Lower leg skin (tissue), 4 donors: ENCODE measurements at regions of chr2 and their contacts with region 1.

Region 1: DNA sequence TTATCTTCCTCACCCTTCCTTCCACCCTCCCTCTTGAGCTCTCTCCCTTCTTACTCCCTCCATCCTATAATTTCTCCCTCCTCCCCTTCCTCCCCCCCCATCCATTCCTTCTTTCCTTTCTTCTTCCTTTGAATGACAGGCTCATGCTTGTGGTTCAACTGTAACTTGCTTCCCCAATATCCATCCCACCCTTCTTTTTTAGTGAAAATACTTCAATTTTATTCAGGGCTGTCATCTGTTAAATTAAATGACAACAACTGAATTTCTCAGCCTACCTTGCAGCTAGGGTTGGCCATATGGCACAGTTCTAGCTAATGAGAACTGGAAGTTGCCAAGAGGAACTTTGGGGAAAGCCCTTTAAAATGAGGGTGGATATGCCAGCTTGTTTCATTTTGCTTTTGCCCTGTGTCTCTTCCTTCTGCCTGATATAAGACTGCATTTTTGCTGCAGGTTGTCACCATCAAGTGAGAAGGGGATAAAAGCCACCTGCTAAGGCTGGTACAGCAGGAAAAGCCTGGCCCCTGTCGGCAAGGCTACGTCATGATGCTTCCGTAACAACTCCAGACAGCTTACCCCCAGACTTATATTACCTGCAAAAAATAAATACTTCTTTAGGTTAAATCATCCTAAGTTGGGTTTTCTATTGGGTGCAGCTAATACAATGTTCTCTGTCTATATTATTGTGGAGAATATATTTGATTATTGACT is 121.8 kb downstream of the NXPH2 start:
- DNase-seq: no peak
- H3K4me3 ChIP-seq: no peak overlapping the region
- CTCF ChIP-seq: no peak
- POLR2A ChIP-seq: no peak

Region 2: GRCh38 chr2:138170485-138170884 is 487.9 kb before region 1 on chr2:
- intact Hi-C with region 1: no loop called
- DNase-seq: no peak
- H3K4me3 ChIP-seq: no peak overlapping the region
- CTCF ChIP-seq: no peak
- POLR2A ChIP-seq: no peak

Region 3: DNA sequence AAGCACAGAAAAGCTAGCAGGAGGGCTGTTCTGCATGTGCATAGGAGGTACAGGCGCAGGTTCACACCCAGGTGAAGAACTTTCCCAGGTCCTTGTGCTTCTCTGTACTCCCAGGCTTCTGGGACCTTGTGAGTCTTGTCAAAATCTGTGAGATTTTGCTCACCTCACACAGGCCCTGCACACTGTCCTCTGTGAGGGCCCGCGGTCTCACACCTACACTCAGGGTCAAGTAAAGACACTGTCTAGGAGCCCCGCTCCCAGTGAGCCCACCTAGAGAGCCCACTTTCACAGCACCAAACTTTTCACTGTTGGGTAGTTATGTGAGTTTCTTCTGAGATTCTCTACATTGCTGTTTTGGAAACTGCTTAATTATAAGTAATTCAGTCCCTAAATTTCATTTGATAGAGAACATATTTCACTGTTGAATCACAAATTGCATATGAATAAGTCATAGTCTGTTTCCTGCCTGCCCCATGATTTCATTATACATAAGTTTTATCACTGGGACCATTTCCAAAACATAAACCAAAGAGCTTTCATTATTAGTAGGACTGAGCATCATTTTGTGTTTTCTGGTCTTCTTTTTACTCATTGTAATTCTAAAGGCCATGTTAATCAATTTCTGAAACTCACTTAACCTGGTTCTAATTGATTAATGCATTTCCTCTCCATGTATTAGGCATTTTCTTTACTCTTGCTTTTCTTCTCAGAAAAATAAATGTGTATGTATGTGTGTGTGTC is 391.0 kb before region 1 on chr2:
- intact Hi-C with region 1: loop called (anchors 5 kb)
- DNase-seq: no peak
- H3K4me3 ChIP-seq: no peak overlapping the region
- CTCF ChIP-seq: no peak
- POLR2A ChIP-seq: no peak

Region 4: GRCh38 chr2:138455275-138456052 is 202.9 kb before region 1 on chr2:
- intact Hi-C with region 1: no loop called
- DNase-seq: no peak
- H3K4me3 ChIP-seq: no peak overlapping the region
- CTCF ChIP-seq: no peak
- POLR2A ChIP-seq: no peak

Region 5: GRCh38 chr2:138676619-138677032 is 18.3 kb after region 1 on chr2:
- intact Hi-C with region 1: no loop called
- DNase-seq: no peak
- H3K4me3 ChIP-seq: no peak overlapping the region
- CTCF ChIP-seq: no peak
- POLR2A ChIP-seq: no peak